ENCODE measurements at regions of chr5 and their contacts with region 1.

Region 1: GRCh38 chr5:178590141-178590923 is at the start of gene COL23A1:
- DNase-seq: no peak
- H3K4me3 ChIP-seq: peak within 1 kb of the TSS; percentile 46
- H3K27ac ChIP-seq: no peak within 1 kb of the TSS
- H3K27me3 ChIP-seq: peaks cover 40% of the 10 kb centered on the region
- CTCF ChIP-seq: peak; percentile 58
- polyA plus RNA-seq, gene COL23A1: not detected in 2 replicates

Region 2: GRCh38 chr5:178526011-178526732 is 64.2 kb before region 1 on chr5:
- CTCF ChIA-PET with region 1: no interaction called
- POLR2A ChIA-PET with region 1: no interaction called
- DNase-seq: no peak
- H3K4me3 ChIP-seq: no peak overlapping the region
- H3K27ac ChIP-seq: no peak overlapping the region
- H3K27me3 ChIP-seq: no peaks in the 10 kb centered on the region
- CTCF ChIP-seq: no peak

Region 3: DNA sequence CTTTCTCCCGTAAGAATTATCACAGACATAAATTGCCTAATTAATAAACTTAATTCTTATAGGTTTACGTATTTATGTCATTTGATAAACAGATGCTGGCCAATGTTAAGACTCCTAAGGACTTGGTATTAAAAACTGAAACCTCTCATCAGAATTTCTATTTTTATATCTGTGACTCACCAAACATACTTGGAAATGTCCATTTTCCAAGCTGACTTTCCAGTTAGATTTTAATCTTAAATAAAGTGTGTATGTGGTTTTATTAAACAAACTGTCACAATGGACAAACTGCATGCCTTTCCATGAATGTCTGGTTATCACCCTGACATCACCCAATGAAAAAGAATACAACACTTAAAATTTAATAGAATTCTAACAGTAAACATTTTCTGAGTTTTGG is 12.4 kb after region 1 on chr5:
- CTCF ChIA-PET with region 1: interaction called, 10 read pairs
- POLR2A ChIA-PET with region 1: interaction called, 3 read pairs
- DNase-seq: no peak
- H3K4me3 ChIP-seq: no peak overlapping the region
- H3K27ac ChIP-seq: no peak overlapping the region
- H3K27me3 ChIP-seq: no peaks in the 10 kb centered on the region
- CTCF ChIP-seq: no peak

Region 4: GRCh38 chr5:178624631-178625546 is 34.6 kb after region 1 on chr5:
- CTCF ChIA-PET with region 1: interaction called, 15 read pairs
- POLR2A ChIA-PET with region 1: no interaction called
- DNase-seq: no peak
- H3K4me3 ChIP-seq: peak overlapping the region; percentile 95
- H3K27ac ChIP-seq: no peak overlapping the region
- H3K27me3 ChIP-seq: no peaks in the 10 kb centered on the region
- CTCF ChIP-seq: no peak

Region 5: GRCh38 chr5:179559284-179560252 is 969.2 kb after region 1 on chr5:
- CTCF ChIA-PET with region 1: no interaction called
- POLR2A ChIA-PET with region 1: no interaction called
- DNase-seq: peak; percentile 96
- H3K4me3 ChIP-seq: peak overlapping the region; percentile 81
- H3K27ac ChIP-seq: peak overlapping the region; percentile 93
- H3K27me3 ChIP-seq: no peaks in the 10 kb centered on the region
- CTCF ChIP-seq: no peak